K562 (cell line): ENCODE measurements at regions of chr22 and their contacts with region 1.

Region 1: GRCh38 chr22:30375312-30375849 is 11.8 kb downstream of the RNF215 start:
- DNase-seq: no peak
- ATAC-seq: no peak
- H3K4me3 ChIP-seq: no peak overlapping the region
- H3K27ac ChIP-seq: no peak overlapping the region
- H3K4me1 ChIP-seq: peaks cover 0 to 10% of the 10 kb centered on the region in 2 experiments; a peak in 2 of 5 replicates
- H3K27me3 ChIP-seq: no peaks in the 10 kb centered on the region
- CTCF ChIP-seq: no peak
- EP300 ChIP-seq: no peak
- POLR2A ChIP-seq: no peak
- RAD21 ChIP-seq: no peak

Region 2: DNA sequence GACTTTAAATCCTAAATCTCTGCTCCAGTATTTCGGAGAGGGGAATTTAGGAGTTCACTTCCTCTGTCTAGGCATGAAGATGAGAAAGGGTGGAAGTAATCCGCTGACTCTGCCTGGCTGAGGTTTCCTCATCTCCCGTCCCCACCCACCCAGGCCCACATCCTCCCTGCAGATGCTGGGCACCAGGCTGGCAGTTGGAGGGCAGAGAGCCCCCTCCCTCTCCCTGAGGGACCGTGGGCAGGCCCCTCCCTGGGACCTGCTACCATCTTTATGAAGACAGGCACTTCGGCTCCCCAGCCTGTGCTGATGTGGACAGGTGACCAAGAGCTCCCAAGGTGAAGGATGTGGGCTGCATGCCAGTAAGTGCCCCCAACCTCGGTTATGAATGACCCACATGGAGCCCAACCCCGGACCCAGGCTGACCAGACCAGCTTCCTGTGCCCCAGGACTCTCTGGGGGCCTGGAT is 92.7 kb before region 1 on chr22:
- CTCF ChIA-PET with region 1: no interaction called
- POLR2A ChIA-PET with region 1: no interaction called
- in situ Hi-C with region 1: loop called (anchors 5 kb)
- intact Hi-C with region 1: no loop called
- DNase-seq: no peak
- ATAC-seq: no peak
- H3K4me3 ChIP-seq: no peak overlapping the region
- H3K27ac ChIP-seq: no peak overlapping the region
- H3K4me1 ChIP-seq: peaks cover 2 to 54% of the 10 kb centered on the region in 2 experiments; a peak in 4 of 5 replicates
- H3K27me3 ChIP-seq: no peaks in the 10 kb centered on the region; a peak in 1 of 5 replicates
- CTCF ChIP-seq: no peak
- EP300 ChIP-seq: no peak
- POLR2A ChIP-seq: no peak
- RAD21 ChIP-seq: no peak

Region 3: DNA sequence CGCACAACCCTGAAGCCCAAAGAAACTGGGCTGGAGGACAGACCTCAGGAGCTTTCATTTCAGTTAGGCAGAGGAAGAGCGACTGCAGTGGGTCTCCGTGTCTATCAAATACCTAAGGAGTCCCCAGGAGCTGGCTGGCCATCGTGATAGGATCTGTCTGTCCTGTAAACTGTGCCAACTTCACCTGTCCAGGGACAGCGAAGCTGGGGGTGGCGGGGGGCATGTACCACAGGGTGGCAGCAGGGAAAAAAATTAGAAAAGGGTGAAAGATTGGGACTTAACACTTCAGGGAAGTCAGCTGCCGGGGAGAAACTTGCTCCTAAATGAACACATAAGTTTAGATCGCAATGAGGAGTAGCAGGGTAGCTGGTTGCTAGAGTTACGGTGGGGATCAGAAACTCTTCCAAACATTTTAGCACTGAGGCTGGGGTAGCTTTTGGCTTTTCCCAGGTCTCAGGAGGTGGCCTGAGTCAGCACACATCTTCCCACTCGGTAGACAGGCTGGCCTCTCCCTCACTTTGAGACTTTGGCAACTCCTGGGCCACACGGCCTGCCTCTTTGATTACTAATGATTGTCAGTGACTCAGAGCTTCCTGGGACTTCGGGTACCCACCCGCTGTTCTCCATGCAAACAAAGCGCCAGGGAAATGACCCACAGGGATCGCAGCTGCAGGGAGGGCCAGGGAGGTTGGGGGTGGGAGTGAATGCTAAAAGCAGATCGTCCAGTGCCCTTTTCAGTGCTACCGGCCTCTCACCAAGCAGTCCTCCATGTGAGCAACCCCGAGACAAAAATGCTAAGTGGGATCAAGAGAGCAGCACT is 47.3 kb after region 1 on chr22:
- CTCF ChIA-PET with region 1: no interaction called
- POLR2A ChIA-PET with region 1: no interaction called
- in situ Hi-C with region 1: no loop called
- intact Hi-C with region 1: no loop called
- DNase-seq: peak; percentile 19 to 73 (median 37)
- ATAC-seq: peak; percentile 24
- H3K4me3 ChIP-seq: peak overlapping the region; percentile 59
- H3K27ac ChIP-seq: peak overlapping the region; percentile 94
- H3K4me1 ChIP-seq: peaks cover 46 to 47% of the 10 kb centered on the region in 2 experiments
- H3K27me3 ChIP-seq: no peaks in the 10 kb centered on the region
- CTCF ChIP-seq: no peak
- EP300 ChIP-seq: no peak
- POLR2A ChIP-seq: no peak
- RAD21 ChIP-seq: no peak

Region 4: DNA sequence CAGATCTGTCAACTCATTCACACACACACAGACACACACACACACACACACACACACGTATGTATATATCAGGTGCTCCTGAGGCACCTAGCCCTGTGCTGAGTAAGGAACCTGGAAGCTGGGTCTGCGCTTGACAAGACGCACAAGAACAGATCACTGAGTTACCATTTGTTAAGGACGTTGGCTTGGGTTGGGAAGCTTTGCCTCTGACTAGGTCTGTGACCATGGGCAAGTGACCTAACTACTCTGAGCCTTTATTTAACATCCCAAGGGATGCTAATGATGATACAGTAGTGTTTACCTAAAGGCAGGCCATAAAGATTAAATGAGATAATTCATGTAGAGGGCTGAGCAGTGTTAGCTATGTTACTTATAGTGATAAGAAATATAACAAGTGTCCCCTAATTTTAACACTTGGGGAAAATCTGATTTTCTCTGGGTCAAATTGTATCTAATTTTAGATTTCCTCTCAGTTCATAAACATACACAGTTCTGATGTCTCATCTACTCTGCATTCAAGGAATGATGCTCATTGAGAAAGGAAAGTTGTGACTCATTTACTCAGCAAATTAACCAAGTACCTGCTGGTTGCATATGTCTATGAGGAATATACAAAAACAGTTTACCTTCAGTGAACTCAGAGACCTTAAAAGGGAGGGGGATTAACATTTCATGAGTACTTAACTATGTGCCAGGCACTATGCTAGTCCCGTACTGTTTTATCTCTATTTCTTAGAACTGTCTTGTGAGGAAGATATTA is 798.2 kb after region 1 on chr22:
- CTCF ChIA-PET with region 1: no interaction called
- POLR2A ChIA-PET with region 1: no interaction called
- in situ Hi-C with region 1: no loop called
- intact Hi-C with region 1: no loop called
- DNase-seq: no peak
- ATAC-seq: no peak
- H3K4me3 ChIP-seq: no peak overlapping the region
- H3K27ac ChIP-seq: no peak overlapping the region
- H3K4me1 ChIP-seq: no peaks in the 10 kb centered on the region; a peak in 1 of 5 replicates
- H3K27me3 ChIP-seq: no peaks in the 10 kb centered on the region
- CTCF ChIP-seq: no peak
- EP300 ChIP-seq: no peak
- POLR2A ChIP-seq: no peak
- RAD21 ChIP-seq: no peak